ENCODE measurements at regions of chr6 and their contacts with region 1.

Region 1: DNA sequence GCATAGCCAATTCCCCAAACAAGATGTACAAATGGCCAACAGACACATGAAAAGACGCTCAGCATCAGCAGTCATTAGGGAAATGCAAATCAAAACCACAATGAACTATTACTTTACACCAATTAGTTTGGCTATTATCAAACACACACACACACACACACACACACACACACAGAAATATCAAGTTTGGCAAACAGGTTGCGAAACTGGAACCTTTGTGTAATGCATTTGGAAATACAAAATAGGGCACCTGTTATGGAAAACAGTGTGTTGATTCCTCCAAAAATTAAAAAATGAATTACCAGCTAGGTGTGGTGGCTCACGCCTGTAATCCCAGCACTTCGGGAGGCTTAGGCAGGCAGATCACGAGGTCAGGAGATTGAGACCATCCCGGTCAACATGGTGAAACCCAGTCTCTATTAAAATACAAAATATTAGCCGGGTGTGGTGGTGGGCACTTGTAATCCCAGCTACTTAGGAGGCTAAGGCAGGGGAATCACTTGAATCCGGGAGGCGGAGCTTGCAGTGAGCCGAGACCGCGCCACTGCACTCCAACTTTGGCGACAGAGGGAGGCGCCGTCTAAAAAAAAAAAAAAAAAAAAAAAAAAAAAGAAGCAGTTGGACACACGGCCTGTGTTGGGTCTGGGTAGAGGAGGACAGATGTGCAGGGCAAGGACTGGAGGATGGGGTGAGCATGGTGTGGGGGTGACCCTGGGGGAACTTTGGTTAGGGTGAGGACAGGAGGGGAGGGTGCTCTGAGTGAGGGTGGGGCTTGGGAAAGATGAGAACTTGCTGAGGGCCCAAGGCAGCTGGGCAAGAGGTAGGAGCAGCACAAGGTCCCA is 23.8 kb downstream of the HLA-F start:
- DNase-seq: no peak
- ATAC-seq: no peak
- H3K4me3 ChIP-seq: peak overlapping the region; percentile 85; the same call in 1 of the 2 replicates
- H3K27ac ChIP-seq: no peak overlapping the region
- H3K4me1 ChIP-seq: peaks cover 16% of the 10 kb centered on the region
- H3K27me3 ChIP-seq: no peaks in the 10 kb centered on the region
- CTCF ChIP-seq: no peak

Region 2: DNA sequence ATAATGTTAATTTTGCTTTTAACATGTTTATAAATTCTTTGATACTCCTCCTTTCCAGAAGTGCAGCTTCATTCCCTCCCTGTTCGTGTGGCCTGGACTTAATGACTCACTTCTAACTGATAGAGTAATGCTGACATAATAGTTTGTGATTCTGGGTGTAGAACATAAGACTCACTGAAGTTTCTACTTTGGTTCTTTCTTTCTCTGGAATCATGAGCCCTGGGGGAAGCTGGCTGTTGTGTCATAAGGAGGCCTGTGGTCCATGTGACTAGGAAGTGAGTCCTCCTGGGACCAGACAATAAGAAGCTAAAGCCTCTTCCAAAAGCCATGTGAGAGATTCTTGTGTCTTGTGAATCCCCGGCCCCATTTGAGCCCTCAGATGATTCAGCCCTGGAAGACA is 50.1 kb after region 1 on chr6:
- CTCF ChIA-PET with region 1: interaction called, 10 read pairs
- POLR2A ChIA-PET with region 1: no interaction called
- intact Hi-C with region 1: no loop called
- DNase-seq: peak; percentile 71
- ATAC-seq: peak; percentile 38
- H3K4me3 ChIP-seq: no peak overlapping the region
- H3K27ac ChIP-seq: peak overlapping the region; percentile 58
- H3K4me1 ChIP-seq: peaks cover 7% of the 10 kb centered on the region
- H3K27me3 ChIP-seq: no peaks in the 10 kb centered on the region
- CTCF ChIP-seq: no peak

Region 3: GRCh38 chr6:29909985-29910384 is 162.9 kb after region 1 on chr6:
- CTCF ChIA-PET with region 1: no interaction called
- POLR2A ChIA-PET with region 1: no interaction called
- intact Hi-C with region 1: no loop called
- DNase-seq: no peak
- ATAC-seq: peak; percentile 37; the same call in 1 of the 2 replicates
- H3K4me3 ChIP-seq: no peak overlapping the region
- H3K27ac ChIP-seq: no peak overlapping the region
- H3K4me1 ChIP-seq: no peaks in the 10 kb centered on the region
- H3K27me3 ChIP-seq: no peaks in the 10 kb centered on the region
- CTCF ChIP-seq: no peak

Measured in PC-3 (cell line).